WTC11 (cell line): ENCODE measurements at regions of chr16 and their contacts with region 1.

Region 1: GRCh38 chr16:75234856-75235696 is 16.3 kb downstream of the CTRB1 start:
- DNase-seq: peak; percentile 11
- ATAC-seq: no peak
- H3K4me3 Mint-ChIP-seq: no peak overlapping the region
- H3K27ac Mint-ChIP-seq: no peak overlapping the region
- H3K4me1 Mint-ChIP-seq: peaks cover 7% of the 10 kb centered on the region
- H3K27me3 Mint-ChIP-seq: no peaks in the 10 kb centered on the region
- CTCF ChIP-seq: no peak

Region 2: GRCh38 chr16:75203667-75204409 is 31.2 kb before region 1 on chr16:
- CTCF ChIA-PET with region 1: interaction called, 22 read pairs
- POLR2A ChIA-PET with region 1: interaction called, 5 read pairs
- DNase-seq: no peak
- ATAC-seq: no peak
- H3K4me3 Mint-ChIP-seq: no peak overlapping the region
- H3K27ac Mint-ChIP-seq: 0 out of 2 replicates have a peak overlapping the region, but pooled peaks have one; percentile 9
- H3K4me1 Mint-ChIP-seq: 0 out of 2 replicates have a peak, but pooled peaks cover 6% of the 10 kb centered on the region
- H3K27me3 Mint-ChIP-seq: no peaks in the 10 kb centered on the region
- CTCF ChIP-seq: no peak

Region 3: DNA sequence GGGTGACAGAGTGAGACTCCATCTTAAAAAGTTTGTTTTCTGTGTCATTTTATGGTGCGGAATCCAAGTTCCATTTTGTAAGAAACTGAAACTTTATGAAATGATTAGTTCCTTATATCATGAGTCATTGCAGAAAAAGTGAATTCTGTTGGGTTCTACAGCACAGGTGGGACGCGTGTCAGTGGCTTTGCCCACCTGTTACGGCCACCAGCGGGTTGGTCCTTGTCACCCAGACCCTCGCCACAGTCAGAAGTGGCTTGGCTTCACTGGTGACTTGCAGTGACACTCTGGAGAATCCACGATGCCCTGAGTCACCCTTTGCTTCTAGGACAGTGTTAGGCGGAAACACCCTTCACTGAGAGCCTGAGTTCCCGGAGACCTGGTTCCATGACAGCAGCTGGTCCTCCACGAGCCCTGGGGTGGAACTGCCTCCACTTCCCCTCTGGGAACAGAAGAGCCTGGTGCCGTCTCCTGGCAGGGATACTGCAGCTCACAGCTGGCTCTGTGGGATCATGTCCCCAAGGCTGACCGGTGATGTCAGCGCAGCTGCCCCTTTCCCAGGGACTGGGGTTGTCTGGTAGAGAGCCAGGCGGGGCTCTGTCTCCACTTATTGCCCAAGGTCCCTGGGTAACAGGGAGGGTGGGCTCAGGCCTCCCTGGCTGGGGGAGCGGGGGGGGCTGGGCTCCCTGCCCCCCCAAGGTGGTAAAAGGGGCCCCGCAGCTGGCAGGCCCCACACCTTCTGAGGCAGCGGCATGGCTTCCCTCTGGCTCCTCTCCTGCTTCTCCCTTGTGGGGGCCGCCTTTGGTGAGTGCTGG is 16.6 kb before region 1 on chr16 and contains the start of gene CTRB1:
- CTCF ChIA-PET with region 1: interaction called, 12 read pairs
- POLR2A ChIA-PET with region 1: no interaction called
- DNase-seq: no peak
- ATAC-seq: no peak
- H3K4me3 Mint-ChIP-seq: no peak within 1 kb of the TSS
- H3K27ac Mint-ChIP-seq: no peak within 1 kb of the TSS
- H3K4me1 Mint-ChIP-seq: no peaks in the 10 kb centered on the region
- H3K27me3 Mint-ChIP-seq: no peaks in the 10 kb centered on the region
- CTCF ChIP-seq: no peak
- total RNA-seq, gene CTRB1: 3.9 to 5.7 TPM (median 5.7 TPM) in 3 replicates

Region 4: GRCh38 chr16:75244844-75245758 is 10.0 kb after region 1 on chr16:
- CTCF ChIA-PET with region 1: interaction called, 92 read pairs
- POLR2A ChIA-PET with region 1: interaction called, 13 read pairs
- DNase-seq: peak; percentile 68
- ATAC-seq: peak; percentile 56
- H3K4me3 Mint-ChIP-seq: no peak overlapping the region
- H3K27ac Mint-ChIP-seq: peak overlapping the region; percentile 98
- H3K4me1 Mint-ChIP-seq: peaks cover 68% of the 10 kb centered on the region
- H3K27me3 Mint-ChIP-seq: no peaks in the 10 kb centered on the region
- CTCF ChIP-seq: no peak

Region 5: GRCh38 chr16:75265845-75266701 is 31.0 kb after region 1 on chr16:
- CTCF ChIA-PET with region 1: interaction called, 12 read pairs
- POLR2A ChIA-PET with region 1: interaction called, 3 read pairs
- DNase-seq: peak; percentile 90
- ATAC-seq: peak; percentile 78
- H3K4me3 Mint-ChIP-seq: peak overlapping the region; percentile 74
- H3K27ac Mint-ChIP-seq: peak overlapping the region; percentile 90
- H3K4me1 Mint-ChIP-seq: peaks cover 39% of the 10 kb centered on the region
- H3K27me3 Mint-ChIP-seq: no peaks in the 10 kb centered on the region
- CTCF ChIP-seq: no peak

Region 6: DNA sequence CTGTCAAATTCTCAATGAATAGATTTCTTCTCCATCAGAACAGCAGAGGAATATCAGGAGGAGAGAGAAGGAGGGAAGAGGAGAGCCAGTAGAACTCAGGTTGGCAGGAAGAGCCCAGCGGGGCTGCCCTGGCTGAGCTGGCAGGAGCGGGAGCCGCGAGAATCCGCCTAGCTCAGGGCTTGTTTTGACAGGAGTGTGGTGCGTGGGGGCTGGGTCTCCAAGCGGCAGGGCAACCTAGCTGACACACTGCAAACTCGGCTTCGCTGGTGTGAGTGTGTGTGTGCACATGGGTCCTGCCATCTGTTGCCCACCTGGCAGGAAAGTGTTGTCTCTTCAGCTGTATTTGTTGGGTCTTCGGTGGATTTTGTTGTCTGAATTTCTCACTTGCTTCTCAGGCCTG is 44.2 kb after region 1 on chr16:
- CTCF ChIA-PET with region 1: interaction called, 19 read pairs
- POLR2A ChIA-PET with region 1: no interaction called
- DNase-seq: no peak
- ATAC-seq: peak; percentile 71
- H3K4me3 Mint-ChIP-seq: no peak overlapping the region
- H3K27ac Mint-ChIP-seq: peak overlapping the region; percentile 58; the same call in 1 of the 2 replicates
- H3K4me1 Mint-ChIP-seq: no peaks in the 10 kb centered on the region; the same call in 1 of the 2 replicates
- H3K27me3 Mint-ChIP-seq: no peaks in the 10 kb centered on the region
- CTCF ChIP-seq: no peak